ENCODE measurements at regions of chr9 and their contacts with region 1.

Region 1: DNA sequence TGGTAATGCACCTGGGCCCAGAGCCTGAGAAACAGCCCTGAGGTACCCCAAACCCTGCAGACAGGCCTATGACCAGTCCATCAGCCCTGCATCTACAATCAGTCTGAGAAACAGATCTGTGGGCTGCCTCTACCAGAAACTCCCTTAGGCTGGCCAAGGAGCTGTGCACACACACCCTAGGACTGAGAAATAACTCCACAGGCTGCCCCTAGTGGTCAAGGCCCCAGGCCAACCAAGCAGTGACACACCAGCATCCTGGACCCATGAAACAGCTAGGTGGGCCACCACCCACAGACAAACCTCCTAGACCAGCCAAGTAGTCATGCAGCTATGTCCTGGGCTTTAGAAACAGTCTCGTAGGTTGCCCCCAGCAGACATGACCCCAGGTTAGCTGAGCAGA is 253.6 kb upstream of the VLDLR start:
- DNase-seq: no peak
- H3K4me3 ChIP-seq: no peak overlapping the region
- H3K27ac ChIP-seq: no peak overlapping the region
- H3K4me1 ChIP-seq: no peaks in the 10 kb centered on the region
- H3K27me3 ChIP-seq: no peaks in the 10 kb centered on the region
- CTCF ChIP-seq: no peak
- POLR2A ChIP-seq: no peak

Region 2: GRCh38 chr9:1248743-1249142 is 1119.2 kb before region 1 on chr9:
- intact Hi-C with region 1: loop called (anchors 10 kb)
- DNase-seq: no peak
- H3K4me3 ChIP-seq: no peak overlapping the region
- H3K27ac ChIP-seq: no peak overlapping the region
- H3K4me1 ChIP-seq: no peaks in the 10 kb centered on the region
- H3K27me3 ChIP-seq: no peaks in the 10 kb centered on the region
- CTCF ChIP-seq: no peak
- POLR2A ChIP-seq: no peak

Region 3: DNA sequence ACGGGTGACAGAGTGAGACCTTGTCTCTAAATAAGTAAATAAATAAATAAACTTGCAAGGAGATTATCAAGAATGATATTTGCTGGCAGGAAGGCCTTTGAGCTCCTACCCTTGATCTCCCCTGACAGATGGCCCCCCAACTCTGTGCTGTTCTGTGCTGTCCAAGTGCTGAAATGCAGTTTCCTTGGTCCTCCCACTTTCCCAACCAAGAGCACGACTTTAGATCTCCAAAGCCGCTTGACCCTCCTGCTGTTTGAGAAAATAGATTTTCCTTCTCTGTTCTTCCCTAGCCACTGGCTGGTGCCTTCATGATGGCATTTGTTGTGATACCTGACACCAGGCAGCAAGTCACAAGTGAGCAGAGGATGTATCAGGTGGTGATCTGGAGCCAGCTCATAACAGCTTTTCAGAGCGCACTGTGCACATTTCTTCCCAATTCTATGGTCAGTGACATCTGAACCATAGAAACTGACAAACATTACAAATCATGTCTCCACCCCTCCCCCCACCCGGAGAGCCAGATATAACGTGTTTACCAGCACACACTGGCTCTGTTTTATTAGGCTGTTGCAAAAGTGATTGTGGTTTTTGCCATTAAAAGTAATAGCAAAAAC is 555.9 kb after region 1 on chr9:
- intact Hi-C with region 1: no loop called
- DNase-seq: no peak
- H3K4me3 ChIP-seq: no peak overlapping the region
- H3K27ac ChIP-seq: no peak overlapping the region
- H3K4me1 ChIP-seq: no peaks in the 10 kb centered on the region
- H3K27me3 ChIP-seq: no peaks in the 10 kb centered on the region
- CTCF ChIP-seq: no peak
- POLR2A ChIP-seq: no peak